Activated naive CD4-positive, alpha-beta T cell treated with anti-CD3 and anti-CD28 coated beads for 36 hours (primary cell): ENCODE measurements at regions of chr14 and their contacts with region 1.

Region 1: GRCh38 chr14:99982537-99983250 is 82.5 kb upstream of the EVL start:
- DNase-seq: peak; percentile 76
- H3K4me3 Mint-ChIP-seq: no peak overlapping the region
- H3K27ac Mint-ChIP-seq: no peak overlapping the region
- H3K4me1 Mint-ChIP-seq: peaks cover 18% of the 10 kb centered on the region
- H3K27me3 Mint-ChIP-seq: no peaks in the 10 kb centered on the region

Region 2: GRCh38 chr14:98725191-98725590 is 1257.5 kb before region 1 on chr14:
- CTCF ChIA-PET with region 1: no interaction called
- intact Hi-C with region 1: no loop called
- DNase-seq: no peak
- H3K4me3 Mint-ChIP-seq: no peak overlapping the region
- H3K27ac Mint-ChIP-seq: no peak overlapping the region
- H3K4me1 Mint-ChIP-seq: no peaks in the 10 kb centered on the region
- H3K27me3 Mint-ChIP-seq: no peaks in the 10 kb centered on the region

Region 3: GRCh38 chr14:99995700-99996356 is 13.1 kb after region 1 on chr14:
- CTCF ChIA-PET with region 1: interaction called, 4 read pairs
- intact Hi-C with region 1: loop called (anchors 1 kb)
- DNase-seq: peak; percentile 82
- H3K4me3 Mint-ChIP-seq: no peak overlapping the region
- H3K27ac Mint-ChIP-seq: no peak overlapping the region
- H3K4me1 Mint-ChIP-seq: peaks cover 11% of the 10 kb centered on the region
- H3K27me3 Mint-ChIP-seq: peaks cover 4% of the 10 kb centered on the region

Region 4: DNA sequence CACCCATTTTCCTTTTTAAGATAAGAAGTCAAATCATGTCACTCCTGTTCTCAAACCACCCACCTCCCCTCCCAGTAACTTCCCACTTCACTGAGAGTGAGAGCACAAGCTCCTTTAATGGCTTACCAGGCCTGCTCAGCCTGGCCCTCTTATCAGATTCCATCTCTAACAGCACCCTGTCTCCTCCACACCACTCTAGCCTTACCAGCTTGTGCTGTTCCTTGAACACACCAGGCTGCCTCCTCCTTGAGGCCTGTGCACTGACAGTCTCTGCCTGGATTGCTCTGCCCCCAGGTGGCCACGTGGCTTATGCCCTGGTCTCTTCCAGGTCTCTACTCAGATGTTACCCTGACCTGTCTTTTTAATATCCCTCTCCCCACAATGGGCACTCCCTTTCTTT is 42.4 kb after region 1 on chr14:
- CTCF ChIA-PET with region 1: interaction called, 4 read pairs
- intact Hi-C with region 1: loop called (anchors 1 kb)
- DNase-seq: peak; percentile 54
- H3K4me3 Mint-ChIP-seq: no peak overlapping the region
- H3K27ac Mint-ChIP-seq: no peak overlapping the region
- H3K4me1 Mint-ChIP-seq: peaks cover 8% of the 10 kb centered on the region
- H3K27me3 Mint-ChIP-seq: no peaks in the 10 kb centered on the region

Region 5: DNA sequence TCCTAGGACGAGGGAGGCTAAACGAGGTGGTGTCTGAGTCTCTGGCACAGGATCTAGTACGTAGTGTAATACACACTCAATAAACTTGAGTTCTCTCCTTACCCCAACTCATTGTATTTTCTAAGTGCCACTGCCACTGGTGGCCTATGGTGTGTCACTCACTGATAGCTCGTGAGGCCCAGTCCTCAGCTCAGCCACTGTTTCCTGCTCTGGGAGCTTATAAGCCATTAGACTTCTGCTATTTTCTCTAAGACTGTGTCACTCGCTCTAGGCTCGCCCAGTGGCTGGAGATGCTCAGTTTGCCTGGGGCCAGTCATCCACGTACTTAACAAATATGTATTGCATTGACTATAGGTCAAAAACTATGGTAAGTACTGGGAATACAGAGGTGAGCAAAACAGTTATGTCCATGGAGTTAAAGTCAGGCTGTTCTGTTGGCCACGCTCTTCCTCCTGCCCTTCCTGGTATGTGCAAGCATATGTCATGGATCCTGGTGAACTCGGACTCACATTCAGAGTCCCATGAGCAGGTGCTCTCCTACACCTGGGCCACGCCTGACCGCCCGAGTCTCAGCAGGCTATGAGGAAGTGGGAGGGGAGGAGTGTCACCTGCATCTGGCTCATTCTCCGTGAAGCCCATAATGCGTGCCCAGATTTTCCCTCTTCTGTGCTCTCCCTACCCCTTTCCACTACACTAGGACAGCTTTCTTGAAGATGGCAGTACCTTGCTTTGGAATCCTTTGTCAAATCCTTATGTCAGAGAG is 135.1 kb after region 1 on chr14:
- CTCF ChIA-PET with region 1: interaction called, 14 read pairs
- intact Hi-C with region 1: no loop called
- DNase-seq: no peak
- H3K4me3 Mint-ChIP-seq: no peak overlapping the region
- H3K27ac Mint-ChIP-seq: peak overlapping the region; percentile 75
- H3K4me1 Mint-ChIP-seq: peaks cover 27% of the 10 kb centered on the region
- H3K27me3 Mint-ChIP-seq: no peaks in the 10 kb centered on the region

Region 6: GRCh38 chr14:100165376-100165775 is 182.7 kb after region 1 on chr14:
- CTCF ChIA-PET with region 1: no interaction called
- intact Hi-C with region 1: no loop called
- DNase-seq: no peak
- H3K4me3 Mint-ChIP-seq: no peak overlapping the region
- H3K27ac Mint-ChIP-seq: no peak overlapping the region
- H3K4me1 Mint-ChIP-seq: peaks cover 8% of the 10 kb centered on the region
- H3K27me3 Mint-ChIP-seq: peaks cover 3% of the 10 kb centered on the region

Region 7: GRCh38 chr14:100842799-100843198 is 860.1 kb after region 1 on chr14:
- CTCF ChIA-PET with region 1: no interaction called
- intact Hi-C with region 1: no loop called
- DNase-seq: no peak
- H3K4me3 Mint-ChIP-seq: no peak overlapping the region
- H3K27ac Mint-ChIP-seq: no peak overlapping the region
- H3K4me1 Mint-ChIP-seq: no peaks in the 10 kb centered on the region
- H3K27me3 Mint-ChIP-seq: no peaks in the 10 kb centered on the region